Activated CD4-positive, alpha-beta memory T cell treated with anti-CD3 and anti-CD28 coated beads for 36 hours (primary cell): ENCODE measurements at regions of chr2 and their contacts with region 1.

Region 1: DNA sequence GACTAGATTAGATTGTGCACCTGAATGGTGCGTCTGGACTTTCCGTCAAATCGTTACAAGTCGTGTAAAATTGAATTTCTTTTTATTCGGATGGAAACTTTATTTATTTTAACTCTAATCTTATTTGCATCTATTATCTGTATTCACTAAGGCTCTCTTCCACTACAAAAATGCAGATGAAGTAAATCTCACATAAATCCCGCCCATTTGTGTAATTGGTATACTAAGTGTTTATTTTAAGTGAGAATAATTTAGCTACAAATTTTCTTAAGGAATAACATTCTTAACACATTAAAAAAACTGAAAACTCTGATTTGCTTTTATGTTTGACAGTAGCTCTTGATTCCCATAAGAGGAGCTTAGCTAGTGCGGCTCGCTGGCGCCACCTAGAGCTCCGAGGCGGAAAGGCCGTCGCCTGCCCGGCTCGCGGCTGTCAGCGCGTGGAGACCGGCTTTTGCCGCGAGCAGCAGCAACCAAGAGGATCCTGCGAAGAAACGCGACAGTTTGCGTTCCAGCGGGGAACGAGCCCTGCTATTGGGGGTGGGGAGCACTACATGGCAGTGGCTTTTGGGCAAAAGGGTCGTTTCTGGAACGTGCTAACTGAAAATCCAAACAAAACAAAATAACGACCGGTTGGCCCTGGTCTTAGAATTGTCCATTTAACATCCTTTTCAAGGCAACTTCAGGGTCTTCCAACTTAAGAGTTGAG is 6.7 kb downstream of the SP9 start:
- DNase-seq: peak; percentile 94
- H3K4me3 Mint-ChIP-seq: peak overlapping the region; percentile 66
- H3K27ac Mint-ChIP-seq: peak overlapping the region; percentile 60
- H3K4me1 Mint-ChIP-seq: peaks cover 39% of the 10 kb centered on the region
- H3K27me3 Mint-ChIP-seq: peaks cover 57% of the 10 kb centered on the region

Region 2: GRCh38 chr2:173402405-173402974 is 939.0 kb before region 1 on chr2:
- CTCF ChIA-PET with region 1: interaction called, 36 read pairs
- POLR2A ChIA-PET with region 1: no interaction called
- intact Hi-C with region 1: loop called (anchors 2 kb)
- DNase-seq: peak; percentile 81
- H3K4me3 Mint-ChIP-seq: no peak overlapping the region
- H3K27ac Mint-ChIP-seq: no peak overlapping the region
- H3K4me1 Mint-ChIP-seq: peaks cover 4% of the 10 kb centered on the region
- H3K27me3 Mint-ChIP-seq: peaks cover 44% of the 10 kb centered on the region

Region 3: DNA sequence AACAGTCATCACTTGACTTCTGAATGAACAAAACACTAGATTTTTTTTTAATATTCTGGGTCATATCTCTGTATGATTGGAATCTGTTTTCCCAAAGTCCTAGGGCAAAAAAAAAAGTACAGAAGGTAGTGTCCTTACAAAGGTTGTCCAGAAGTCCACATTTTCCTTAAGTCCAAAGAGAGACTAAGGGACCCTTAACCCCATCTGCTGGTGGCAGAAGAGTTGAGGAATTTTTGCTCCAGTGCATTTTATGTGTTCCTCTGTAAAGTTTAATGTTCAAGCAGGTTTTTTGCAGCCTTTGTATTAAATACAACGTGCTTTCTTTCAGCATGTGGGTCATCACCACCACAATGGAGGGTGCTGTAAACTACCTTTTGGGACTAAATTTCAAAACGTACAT is 592.1 kb before region 1 on chr2:
- CTCF ChIA-PET with region 1: no interaction called
- POLR2A ChIA-PET with region 1: no interaction called
- intact Hi-C with region 1: loop called (anchors 5 kb)
- DNase-seq: no peak
- H3K4me3 Mint-ChIP-seq: no peak overlapping the region
- H3K27ac Mint-ChIP-seq: no peak overlapping the region
- H3K4me1 Mint-ChIP-seq: no peaks in the 10 kb centered on the region
- H3K27me3 Mint-ChIP-seq: peaks cover 7% of the 10 kb centered on the region

Region 4: GRCh38 chr2:173898178-173898668 is 443.2 kb before region 1 on chr2:
- CTCF ChIA-PET with region 1: no interaction called
- POLR2A ChIA-PET with region 1: no interaction called
- intact Hi-C with region 1: loop called (anchors 10 kb)
- DNase-seq: no peak
- H3K4me3 Mint-ChIP-seq: no peak overlapping the region
- H3K27ac Mint-ChIP-seq: peak overlapping the region; percentile 10
- H3K4me1 Mint-ChIP-seq: peaks cover 23% of the 10 kb centered on the region
- H3K27me3 Mint-ChIP-seq: no peaks in the 10 kb centered on the region

Region 5: GRCh38 chr2:174158003-174158402 is 183.4 kb before region 1 on chr2:
- CTCF ChIA-PET with region 1: interaction called, 14 read pairs
- POLR2A ChIA-PET with region 1: no interaction called
- intact Hi-C with region 1: loop called (anchors 5 kb)
- DNase-seq: peak; percentile 22
- H3K4me3 Mint-ChIP-seq: no peak overlapping the region
- H3K27ac Mint-ChIP-seq: no peak overlapping the region
- H3K4me1 Mint-ChIP-seq: peaks cover 2% of the 10 kb centered on the region
- H3K27me3 Mint-ChIP-seq: no peaks in the 10 kb centered on the region

Region 6: GRCh38 chr2:174326161-174327020 is 15.0 kb before region 1 on chr2:
- CTCF ChIA-PET with region 1: interaction called, 18 read pairs
- POLR2A ChIA-PET with region 1: interaction called, 7 read pairs
- intact Hi-C with region 1: loop called (anchors 2 kb)
- DNase-seq: peak; percentile 43
- H3K4me3 Mint-ChIP-seq: peak overlapping the region; percentile 51
- H3K27ac Mint-ChIP-seq: peak overlapping the region; percentile 10
- H3K4me1 Mint-ChIP-seq: peaks cover 25% of the 10 kb centered on the region
- H3K27me3 Mint-ChIP-seq: peaks cover 73% of the 10 kb centered on the region

Region 7: GRCh38 chr2:176126929-176127773 is 1785.7 kb after region 1 on chr2:
- CTCF ChIA-PET with region 1: no interaction called
- POLR2A ChIA-PET with region 1: no interaction called
- intact Hi-C with region 1: loop called (anchors 10 kb)
- DNase-seq: peak; percentile 67
- H3K4me3 Mint-ChIP-seq: no peak overlapping the region
- H3K27ac Mint-ChIP-seq: no peak overlapping the region
- H3K4me1 Mint-ChIP-seq: peaks cover 28% of the 10 kb centered on the region
- H3K27me3 Mint-ChIP-seq: peaks cover 74% of the 10 kb centered on the region